ENCODE measurements at regions of chr17 and their contacts with region 1.

Region 1: DNA sequence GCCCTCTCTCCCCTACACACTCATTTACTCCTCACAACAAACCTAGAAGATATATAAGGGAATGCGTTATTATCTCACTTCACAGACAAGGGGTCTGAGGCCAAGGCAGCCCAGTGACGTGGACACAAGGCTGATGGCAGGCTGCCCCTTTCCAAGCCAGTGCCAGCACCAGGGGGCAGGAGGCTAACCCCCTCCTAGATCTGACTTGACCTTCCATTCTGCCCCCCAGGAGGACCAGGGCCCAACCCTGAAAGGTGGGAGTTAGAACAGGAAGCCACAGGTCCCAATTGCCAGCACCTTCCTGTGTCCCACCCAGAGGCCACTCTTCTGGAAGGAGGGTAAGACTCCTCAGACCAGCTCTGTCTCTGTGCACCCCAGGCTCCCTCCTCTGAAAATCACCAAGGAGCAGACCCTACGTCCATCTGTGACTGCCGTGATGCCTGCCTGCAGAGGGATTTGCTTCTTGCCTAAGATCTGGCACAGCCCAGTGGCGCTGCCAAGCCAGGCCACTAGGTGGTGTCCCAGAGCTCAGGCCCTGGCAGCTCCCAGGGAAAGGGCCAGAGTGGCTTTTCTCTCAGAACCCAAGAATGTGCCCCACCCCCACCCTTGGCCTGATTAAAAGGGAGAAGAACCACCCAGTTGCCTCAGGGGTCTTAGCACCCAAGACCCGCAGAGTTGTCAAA is 42.4 kb upstream of the MRPS23 start:
- DNase-seq: peak; percentile 87
- H3K4me3 ChIP-seq: no peak overlapping the region
- H3K27ac ChIP-seq: peak overlapping the region; percentile 70
- H3K4me1 ChIP-seq: peaks cover 26% of the 10 kb centered on the region
- H3K27me3 ChIP-seq: no peaks in the 10 kb centered on the region
- CTCF ChIP-seq: peak; percentile 99
- POLR2A ChIP-seq: no peak

Region 2: GRCh38 chr17:57861000-57861789 is 31.1 kb before region 1 on chr17:
- CTCF ChIA-PET with region 1: interaction called, 34 read pairs
- POLR2A ChIA-PET with region 1: no interaction called
- dilution Hi-C with region 1: no loop called
- intact Hi-C with region 1: loop called (anchors 1 kb)
- DNase-seq: peak; percentile 30
- H3K4me3 ChIP-seq: peak overlapping the region; percentile 21 to 49 (median 31)
- H3K27ac ChIP-seq: no peak overlapping the region
- H3K4me1 ChIP-seq: peaks cover 17% of the 10 kb centered on the region
- H3K27me3 ChIP-seq: no peaks in the 10 kb centered on the region
- CTCF ChIP-seq: no peak
- POLR2A ChIP-seq: no peak

Region 3: DNA sequence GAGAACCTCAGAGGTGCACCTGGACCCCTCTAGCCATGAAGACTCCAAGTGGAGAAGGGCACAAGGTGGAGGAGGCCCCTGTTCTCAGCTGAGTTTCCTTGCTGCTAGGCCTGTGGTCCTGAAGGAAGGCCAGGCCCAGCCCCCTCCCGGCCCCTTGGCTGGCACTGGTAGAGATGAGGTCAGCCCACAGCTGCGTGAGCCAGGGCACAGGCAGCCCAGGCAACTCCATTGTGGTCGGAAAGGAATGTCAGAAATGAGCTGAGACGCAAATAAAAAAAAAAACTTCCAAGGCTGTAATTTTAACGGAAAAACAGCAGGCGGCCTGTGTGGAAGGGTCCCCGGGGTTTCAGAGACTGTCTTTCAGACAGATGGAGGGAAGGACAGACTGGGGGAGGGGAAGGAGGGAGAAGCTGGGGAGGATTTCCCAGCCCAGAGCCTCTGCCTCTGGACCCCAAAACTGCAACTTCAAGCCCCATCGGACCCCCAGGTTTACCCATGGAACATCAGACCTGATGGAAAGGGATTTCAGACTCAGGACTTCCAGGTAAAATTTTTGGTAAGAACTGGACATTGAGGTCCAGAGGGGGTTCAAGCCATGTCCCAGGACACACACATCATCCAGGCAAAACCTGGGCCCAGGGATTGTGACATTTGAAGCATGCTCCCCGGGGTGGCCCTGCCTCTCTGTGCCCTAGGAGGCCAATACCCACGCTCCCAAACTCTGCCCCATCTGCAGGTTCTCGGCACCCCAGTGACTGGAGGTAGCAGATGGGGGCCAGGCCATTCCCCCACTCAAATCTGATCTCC is 16.8 kb before region 1 on chr17:
- CTCF ChIA-PET with region 1: interaction called, 67 read pairs
- POLR2A ChIA-PET with region 1: interaction called, 5 read pairs
- dilution Hi-C with region 1: no loop called
- intact Hi-C with region 1: loop called (anchors 1 kb)
- DNase-seq: peak; percentile 98
- H3K4me3 ChIP-seq: peak overlapping the region in 1 of 3 experiments; percentile 12
- H3K27ac ChIP-seq: peak overlapping the region; percentile 96
- H3K4me1 ChIP-seq: peaks cover 58% of the 10 kb centered on the region
- H3K27me3 ChIP-seq: no peaks in the 10 kb centered on the region
- CTCF ChIP-seq: peak; percentile 57 to 58
- POLR2A ChIP-seq: peak; percentile 5

Region 4: GRCh38 chr17:57911834-57912673 is 19.8 kb after region 1 on chr17:
- CTCF ChIA-PET with region 1: no interaction called
- POLR2A ChIA-PET with region 1: no interaction called
- dilution Hi-C with region 1: no loop called
- intact Hi-C with region 1: loop called (anchors 2 kb)
- DNase-seq: peak; percentile 89
- H3K4me3 ChIP-seq: no peak overlapping the region
- H3K27ac ChIP-seq: no peak overlapping the region
- H3K4me1 ChIP-seq: peaks cover 13% of the 10 kb centered on the region
- H3K27me3 ChIP-seq: no peaks in the 10 kb centered on the region
- CTCF ChIP-seq: no peak
- POLR2A ChIP-seq: no peak

Region 5: DNA sequence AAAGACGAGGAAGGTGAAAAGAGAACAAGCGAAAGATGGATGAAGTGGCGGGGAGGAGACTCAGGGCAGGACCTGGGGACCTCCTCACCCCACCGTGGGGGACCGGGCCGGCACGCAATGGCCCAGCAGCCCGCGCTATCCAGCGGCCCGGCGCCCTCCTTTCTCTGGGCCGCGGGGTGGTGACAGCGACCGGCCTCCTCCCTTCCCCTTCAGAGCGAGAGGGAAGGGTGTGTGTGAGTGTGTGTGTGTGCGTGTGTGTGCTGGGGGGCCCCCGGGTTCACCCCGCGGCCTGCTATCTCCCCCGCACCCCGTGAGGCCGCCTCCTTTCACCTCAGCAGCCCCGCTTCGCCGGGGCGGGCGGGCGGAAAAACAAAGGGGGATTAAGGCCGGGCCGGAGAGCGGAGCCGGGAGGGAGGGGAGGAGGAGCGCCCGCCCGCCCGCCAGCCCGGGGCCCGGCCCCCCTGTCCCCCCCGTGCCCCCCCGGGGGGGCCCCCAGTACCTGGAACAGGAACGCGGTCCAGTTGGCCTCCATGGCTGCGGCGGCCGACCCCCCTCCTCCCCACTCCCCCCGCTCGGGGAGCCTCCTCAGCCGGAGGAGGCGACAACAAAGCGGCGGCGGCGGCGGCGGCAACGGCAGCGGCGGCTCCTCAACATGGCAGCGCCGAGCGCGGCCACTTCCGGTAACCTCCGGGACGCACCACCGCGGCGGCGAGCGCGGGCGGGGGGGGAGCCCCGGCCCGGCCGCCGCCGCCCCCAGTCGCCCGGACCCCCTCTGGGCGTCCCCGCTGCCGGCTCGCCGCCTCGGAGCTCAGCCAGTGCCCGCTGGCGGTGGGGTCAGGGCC is 95.5 kb after region 1 on chr17 and contains the start of gene VEZF1:
- CTCF ChIA-PET with region 1: interaction called, 38 read pairs
- POLR2A ChIA-PET with region 1: interaction called, 4 read pairs
- dilution Hi-C with region 1: no loop called
- intact Hi-C with region 1: loop called (anchors 1 kb)
- DNase-seq: peak; percentile 49
- H3K4me3 ChIP-seq: peak within 1 kb of the TSS; percentile 81 to 89 (median 86)
- H3K27ac ChIP-seq: peak within 1 kb of the TSS; percentile 92
- H3K4me1 ChIP-seq: peaks cover 47% of the 10 kb centered on the region
- H3K27me3 ChIP-seq: no peaks in the 10 kb centered on the region
- CTCF ChIP-seq: no peak
- POLR2A ChIP-seq: no peak
- total RNA-seq, gene VEZF1: 58.2 and 59.0 TPM in 2 replicates